A673 (cell line): ENCODE measurements at regions of chr7 and their contacts with region 1.

Region 1: DNA sequence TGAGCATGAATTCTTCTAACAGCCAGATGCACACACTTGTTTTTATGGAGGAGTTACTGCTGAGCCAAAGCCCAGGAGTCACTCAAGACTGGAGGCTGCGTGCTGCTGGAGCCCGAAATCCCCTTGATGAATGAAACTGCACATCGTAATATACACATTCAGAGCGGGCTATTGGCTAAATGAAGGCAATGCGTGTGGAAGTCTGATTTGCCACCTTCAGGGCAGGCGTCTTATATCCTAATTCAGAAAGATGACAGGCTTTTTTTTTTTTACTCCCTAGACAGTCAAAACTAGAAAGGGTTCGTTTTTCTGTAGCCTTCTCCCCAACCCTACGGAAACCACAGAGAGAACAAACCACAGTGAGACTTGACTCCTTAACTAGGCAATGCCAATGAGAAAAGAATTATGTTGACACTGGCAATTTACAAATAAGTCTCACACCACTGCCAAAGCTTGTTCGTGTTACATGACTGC is 227.2 kb upstream of the KLF14 start:
- DNase-seq: peak; percentile 93
- H3K4me3 ChIP-seq: peak overlapping the region; percentile 61
- H3K27ac ChIP-seq: peak overlapping the region; percentile 94
- H3K4me1 ChIP-seq: peaks cover 30% of the 10 kb centered on the region
- H3K27me3 ChIP-seq: no peaks in the 10 kb centered on the region
- CTCF ChIP-seq: no peak

Region 2: GRCh38 chr7:130941322-130942210 is 19.6 kb before region 1 on chr7:
- CTCF ChIA-PET with region 1: interaction called, 14 read pairs
- POLR2A ChIA-PET with region 1: interaction called, 3 read pairs
- intact Hi-C with region 1: no loop called
- DNase-seq: peak; percentile 76
- H3K4me3 ChIP-seq: peak overlapping the region; percentile 55
- H3K27ac ChIP-seq: peak overlapping the region; percentile 94
- H3K4me1 ChIP-seq: peaks cover 86% of the 10 kb centered on the region
- H3K27me3 ChIP-seq: no peaks in the 10 kb centered on the region
- CTCF ChIP-seq: no peak

Region 3: DNA sequence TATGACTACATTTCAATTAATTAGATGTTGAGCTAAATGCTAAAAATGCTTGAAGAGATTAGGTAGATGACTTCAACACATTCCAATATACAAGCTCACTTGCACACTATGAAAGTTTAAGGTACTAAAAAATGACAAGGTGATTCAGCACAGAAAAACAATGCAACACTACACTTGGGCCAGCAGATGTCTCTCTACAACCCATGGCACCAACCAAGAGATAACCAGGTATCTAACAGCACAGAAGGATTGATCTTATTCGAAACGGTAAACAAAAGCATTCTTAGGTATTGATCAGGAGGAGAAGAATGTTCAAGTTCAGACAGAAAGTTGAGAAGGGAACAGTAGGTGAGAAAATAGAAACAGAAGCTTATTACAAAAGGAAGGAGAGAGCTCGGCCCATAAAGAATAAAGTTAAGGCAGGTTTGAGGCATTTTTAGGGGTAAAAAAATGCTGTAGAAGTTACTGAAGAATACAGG is 21.0 kb after region 1 on chr7:
- CTCF ChIA-PET with region 1: no interaction called
- POLR2A ChIA-PET with region 1: no interaction called
- intact Hi-C with region 1: no loop called
- DNase-seq: peak; percentile 59
- H3K4me3 ChIP-seq: no peak overlapping the region
- H3K27ac ChIP-seq: no peak overlapping the region
- H3K4me1 ChIP-seq: peaks cover 26% of the 10 kb centered on the region
- H3K27me3 ChIP-seq: no peaks in the 10 kb centered on the region
- CTCF ChIP-seq: peak; percentile 92

Region 4: DNA sequence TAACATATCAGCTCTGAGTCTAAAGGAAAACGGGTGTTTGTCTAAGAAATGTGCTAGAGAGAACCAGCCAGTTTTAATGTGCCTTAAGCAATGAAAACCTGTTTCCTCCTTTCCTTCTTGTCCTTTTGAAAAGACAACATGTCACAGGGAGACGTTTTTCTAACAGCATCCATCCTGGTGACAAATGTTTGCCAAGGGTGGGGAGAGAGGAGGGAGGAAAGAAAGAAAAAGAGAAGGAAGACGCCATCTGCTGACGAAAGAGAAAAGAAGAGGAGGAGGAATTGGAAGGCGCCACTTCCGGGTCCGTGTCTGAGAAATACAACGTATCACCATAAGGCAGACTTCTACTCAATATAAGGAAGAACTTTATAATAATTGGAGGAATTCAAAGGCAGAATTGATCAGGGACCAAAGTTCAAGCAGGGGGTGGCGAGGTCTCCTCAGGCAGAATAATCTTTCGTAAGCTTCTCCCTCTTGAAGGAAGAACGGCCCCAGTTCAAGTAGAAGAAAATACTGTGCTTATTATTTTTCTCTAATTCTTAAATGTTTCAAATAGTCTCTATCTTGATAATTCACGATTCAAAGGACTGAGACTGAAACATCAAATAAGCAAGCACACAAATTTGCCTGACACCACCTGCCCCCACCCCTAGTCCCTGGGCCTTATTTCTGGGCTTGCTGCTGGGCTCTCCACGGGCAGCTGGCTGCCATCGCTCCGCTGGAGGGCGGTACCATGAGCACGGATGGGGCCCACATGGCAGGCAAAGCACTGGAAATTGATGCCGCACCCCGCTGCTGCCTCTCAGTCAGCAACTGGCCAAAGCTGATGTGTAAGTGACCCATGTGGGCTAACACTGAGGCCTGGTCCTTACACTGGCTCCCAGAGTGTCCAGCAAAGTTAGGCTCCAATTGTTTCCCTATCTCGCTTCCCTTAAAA is 46.5 kb after region 1 on chr7:
- CTCF ChIA-PET with region 1: no interaction called
- POLR2A ChIA-PET with region 1: interaction called, 6 read pairs
- intact Hi-C with region 1: loop called (anchors 5 kb)
- DNase-seq: peak; percentile 95
- H3K4me3 ChIP-seq: peak overlapping the region; percentile 1
- H3K27ac ChIP-seq: peak overlapping the region; percentile 95
- H3K4me1 ChIP-seq: peaks cover 58% of the 10 kb centered on the region
- H3K27me3 ChIP-seq: no peaks in the 10 kb centered on the region
- CTCF ChIP-seq: peak; percentile 67

Region 5: DNA sequence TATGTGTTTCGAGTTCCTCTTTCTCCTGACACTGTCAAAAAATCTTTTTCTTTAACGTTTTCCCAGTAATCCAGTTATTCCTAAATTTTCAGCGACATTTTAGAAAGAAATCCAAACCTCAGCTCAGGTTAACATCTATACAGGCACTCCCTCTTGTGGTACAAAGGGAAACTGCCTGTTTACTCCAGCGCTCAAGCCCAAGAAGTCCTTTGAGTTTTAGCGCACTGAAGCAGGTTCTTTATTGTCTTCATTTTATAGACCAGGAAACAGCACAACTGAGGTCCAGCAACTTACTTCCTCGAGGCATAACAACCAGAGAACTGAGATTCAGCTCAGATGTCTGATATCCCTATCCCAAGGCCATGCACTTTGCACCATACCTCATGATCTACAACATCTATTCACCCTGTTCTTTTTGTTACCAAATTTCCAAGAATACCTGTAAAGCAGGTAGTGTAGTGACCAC is 79.3 kb after region 1 on chr7:
- CTCF ChIA-PET with region 1: interaction called, 3 read pairs
- POLR2A ChIA-PET with region 1: no interaction called
- intact Hi-C with region 1: loop called (anchors 5 kb)
- DNase-seq: peak; percentile 86
- H3K4me3 ChIP-seq: no peak overlapping the region
- H3K27ac ChIP-seq: peak overlapping the region; percentile 89
- H3K4me1 ChIP-seq: peaks cover 56% of the 10 kb centered on the region
- H3K27me3 ChIP-seq: no peaks in the 10 kb centered on the region
- CTCF ChIP-seq: peak; percentile 93